HepG2 (cell line): ENCODE measurements at regions of chr6 and their contacts with region 1.

Region 1: GRCh38 chr6:2695454-2696095 is 55.1 kb downstream of the MYLK4 start:
- DNase-seq: peak; percentile 27
- ATAC-seq: peak; percentile 72
- H3K4me3 ChIP-seq: no peak overlapping the region
- H3K27ac ChIP-seq: no peak overlapping the region
- H3K4me1 ChIP-seq: peaks cover 13% of the 10 kb centered on the region
- H3K27me3 ChIP-seq: peaks cover 0 to 20% of the 10 kb centered on the region in 2 experiments; a peak in 2 of 5 replicates
- CTCF ChIP-seq: peak; percentile 75
- EP300 ChIP-seq: no peak
- POLR2A ChIP-seq: no peak
- RAD21 ChIP-seq: peak; percentile 41; the same call in 1 of the 2 replicates

Region 2: DNA sequence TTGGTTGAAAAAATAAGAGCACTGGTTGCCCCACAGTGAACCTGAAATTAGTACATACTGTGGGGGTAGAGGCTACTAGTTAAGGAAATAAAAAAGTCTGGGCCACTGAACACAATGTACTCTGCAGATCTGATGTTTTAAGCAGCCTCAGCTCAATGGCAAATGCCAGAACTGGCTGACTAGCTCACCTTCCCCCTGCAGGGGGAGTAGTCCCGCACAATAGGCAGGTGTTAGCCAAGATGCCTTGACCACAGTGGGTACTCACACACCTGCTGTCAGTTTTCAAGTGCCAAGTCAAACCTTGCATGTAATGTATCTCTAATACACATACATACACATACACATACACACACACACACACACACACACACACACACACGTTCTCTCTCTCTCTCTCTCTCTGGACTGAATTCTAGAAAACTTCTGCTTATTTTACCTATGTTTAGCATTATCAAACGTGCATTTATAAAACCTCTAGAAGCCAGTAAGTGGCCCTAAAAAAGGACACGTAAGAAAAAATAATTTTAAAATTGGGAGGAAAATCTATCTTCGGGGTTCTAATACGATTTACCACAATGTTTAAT is 486.3 kb before region 1 on chr6:
- CTCF ChIA-PET with region 1: no interaction called
- POLR2A ChIA-PET with region 1: no interaction called
- in situ Hi-C with region 1: no loop called
- intact Hi-C with region 1: no loop called
- DNase-seq: peak; percentile 72
- ATAC-seq: peak; percentile 99
- H3K4me3 ChIP-seq: no peak overlapping the region
- H3K27ac ChIP-seq: no peak overlapping the region
- H3K4me1 ChIP-seq: peaks cover 36% of the 10 kb centered on the region; the same call in 1 of the 2 replicates
- H3K27me3 ChIP-seq: no peaks in the 10 kb centered on the region
- CTCF ChIP-seq: peak; percentile 88
- EP300 ChIP-seq: 0 out of 4 replicates have a peak, but pooled peaks of 1 of the 2 experiments have one; percentile 12
- POLR2A ChIP-seq: no peak
- RAD21 ChIP-seq: peak; percentile 85

Region 3: DNA sequence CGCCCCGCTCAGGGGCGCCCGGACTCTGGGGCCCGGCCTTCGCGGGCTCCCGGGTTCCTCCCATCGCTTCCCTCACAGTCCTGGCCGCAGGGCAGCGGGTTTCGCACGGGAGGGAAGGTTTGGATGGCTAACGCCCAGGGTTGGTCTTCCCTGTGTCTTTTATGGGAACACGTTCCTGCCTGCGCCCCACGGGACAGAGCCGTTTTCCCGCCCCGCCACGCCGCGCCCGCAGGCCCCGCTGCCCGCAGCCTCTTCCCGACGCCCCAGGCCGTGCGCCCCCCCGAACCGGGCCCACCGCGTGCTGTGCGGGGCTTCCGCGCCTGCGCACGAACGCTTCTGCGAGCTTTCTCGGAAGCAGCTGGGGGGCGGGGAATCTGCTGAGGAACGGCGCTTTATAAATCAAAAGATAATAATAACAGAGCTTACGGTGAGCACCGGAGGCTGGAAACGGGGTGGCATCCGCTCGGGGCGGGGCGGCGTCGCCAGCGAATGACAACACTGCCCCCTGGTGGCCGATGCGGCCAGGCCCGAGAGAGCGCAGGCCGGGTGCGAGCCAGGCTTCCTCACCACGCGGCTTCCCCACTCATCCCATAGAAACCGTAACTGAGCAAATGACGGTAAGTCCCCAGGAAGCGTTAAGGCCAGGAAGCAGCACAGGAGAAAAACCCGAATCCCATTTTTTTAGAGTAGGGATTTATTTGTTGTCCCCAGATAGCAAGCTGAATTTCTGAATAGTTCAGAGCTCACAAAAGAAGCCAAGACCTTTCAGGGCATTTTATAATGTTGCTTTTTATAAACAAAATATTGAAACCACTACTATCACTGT is 61.2 kb before region 1 on chr6:
- CTCF ChIA-PET with region 1: no interaction called
- POLR2A ChIA-PET with region 1: no interaction called
- in situ Hi-C with region 1: no loop called
- intact Hi-C with region 1: loop called (anchors 10 kb)
- DNase-seq: peak; percentile 51
- ATAC-seq: peak; percentile 93
- H3K4me3 ChIP-seq: peak overlapping the region; percentile 28 to 68 (median 32); a peak in 5 of 6 replicates
- H3K27ac ChIP-seq: no peak overlapping the region
- H3K4me1 ChIP-seq: peaks cover 31% of the 10 kb centered on the region
- H3K27me3 ChIP-seq: peaks cover 1 to 72% of the 10 kb centered on the region in 2 experiments
- CTCF ChIP-seq: peak; percentile 98
- EP300 ChIP-seq: no peak
- POLR2A ChIP-seq: no peak
- RAD21 ChIP-seq: peak; percentile 98

Region 4: GRCh38 chr6:2706558-2706957 is 11.0 kb after region 1 on chr6:
- CTCF ChIA-PET with region 1: no interaction called
- POLR2A ChIA-PET with region 1: no interaction called
- in situ Hi-C with region 1: no loop called
- intact Hi-C with region 1: no loop called
- DNase-seq: no peak
- ATAC-seq: no peak
- H3K4me3 ChIP-seq: no peak overlapping the region
- H3K27ac ChIP-seq: no peak overlapping the region
- H3K4me1 ChIP-seq: no peaks in the 10 kb centered on the region
- H3K27me3 ChIP-seq: peaks cover 0 to 28% of the 10 kb centered on the region in 2 experiments; a peak in 3 of 5 replicates
- CTCF ChIP-seq: no peak
- EP300 ChIP-seq: no peak
- POLR2A ChIP-seq: no peak
- RAD21 ChIP-seq: no peak